ENCODE measurements at regions of chr15 and their contacts with region 1.

Region 1: DNA sequence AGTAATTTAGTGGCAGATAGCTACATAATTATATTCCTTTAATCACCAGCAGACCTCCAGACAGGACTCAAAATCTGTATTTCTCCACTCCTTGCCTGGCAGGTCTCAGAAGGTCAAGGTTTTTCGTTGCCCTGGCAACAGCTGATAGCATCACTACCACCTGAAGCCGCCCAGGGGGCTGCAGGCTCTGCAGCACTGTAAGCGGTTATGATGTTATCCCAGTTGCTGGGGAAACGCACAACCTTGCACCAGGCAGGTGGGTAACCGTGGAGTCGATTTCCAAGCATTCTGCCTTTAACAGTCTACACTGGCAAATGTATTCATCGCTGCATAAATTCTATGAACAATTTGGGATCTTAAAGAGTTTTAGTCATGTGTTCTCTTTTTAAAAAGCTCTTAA is 756.3 kb downstream of the NTRK3 start:
- DNase-seq: peak in 1 of 2 donors; percentile 9
- H3K4me3 ChIP-seq: no peak overlapping the region
- H3K27ac ChIP-seq: no peak overlapping the region
- H3K4me1 ChIP-seq: no peaks in the 10 kb centered on the region
- H3K27me3 ChIP-seq: no peaks in the 10 kb centered on the region
- CTCF ChIP-seq: no peak
- EP300 ChIP-seq: no peak
- POLR2A ChIP-seq: no peak

Region 2: DNA sequence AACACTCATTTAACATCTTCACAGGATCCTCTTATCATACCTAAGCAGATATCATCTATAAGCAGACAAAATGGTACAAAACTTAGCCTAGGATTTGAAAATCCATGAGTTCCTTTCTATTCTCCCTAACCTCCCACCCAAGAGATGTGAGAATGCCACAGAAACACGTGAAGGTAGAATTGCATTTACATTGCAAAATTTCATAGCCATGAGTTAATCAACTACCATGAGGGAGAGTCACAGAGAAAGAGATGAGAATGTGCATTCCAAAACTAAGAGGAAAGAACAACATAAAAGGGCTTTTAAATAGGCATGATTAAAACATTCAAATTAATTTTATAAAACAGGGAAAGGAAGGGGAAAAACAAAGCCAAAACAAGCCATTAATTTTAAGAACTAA is 49.9 kb before region 1 on chr15:
- intact Hi-C with region 1: loop called (anchors 10 kb)
- DNase-seq: no peak
- H3K4me3 ChIP-seq: no peak overlapping the region
- H3K27ac ChIP-seq: no peak overlapping the region
- H3K4me1 ChIP-seq: no peaks in the 10 kb centered on the region
- H3K27me3 ChIP-seq: no peaks in the 10 kb centered on the region
- CTCF ChIP-seq: no peak
- EP300 ChIP-seq: no peak
- POLR2A ChIP-seq: no peak